Mammary epithelial cell (primary cell): ENCODE measurements at regions of chr22 and their contacts with region 1.

Region 1: DNA sequence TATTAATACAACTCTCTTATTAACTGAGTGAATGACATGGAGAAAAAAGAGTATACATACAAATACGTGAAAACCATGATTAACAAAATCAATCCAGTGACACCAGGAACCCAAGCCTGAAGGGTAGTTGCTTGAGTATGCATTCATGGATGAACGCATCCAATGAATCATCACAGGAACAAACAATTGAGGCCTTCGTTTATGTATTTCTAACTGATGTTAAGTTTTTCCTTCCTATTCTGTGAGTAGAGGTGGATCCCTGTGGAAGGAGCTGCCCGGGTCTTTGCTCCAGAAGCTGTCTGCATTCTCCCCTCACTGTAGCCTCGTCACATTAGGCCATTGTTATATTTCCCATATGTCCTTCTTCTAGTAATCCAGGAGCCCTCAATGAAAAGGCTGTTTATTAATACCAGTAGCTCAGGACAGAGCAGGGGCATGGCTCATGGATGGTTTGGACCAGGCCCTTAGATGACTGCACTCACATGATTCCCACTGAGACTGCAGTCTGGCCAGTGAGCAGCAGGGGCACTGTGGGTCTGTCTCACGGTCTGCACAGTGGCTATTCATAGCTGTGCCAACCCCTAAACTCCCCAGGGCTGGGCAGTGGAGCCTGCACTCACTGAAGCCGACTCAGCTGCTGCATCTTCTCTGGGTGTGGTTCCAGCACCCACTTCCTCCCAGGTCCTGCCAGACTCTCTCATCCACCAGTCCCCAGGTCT is 128.1 kb upstream of the TOP3B start:
- DNase-seq: peak; percentile 93
- H3K4me3 ChIP-seq: no peak overlapping the region
- H3K27ac ChIP-seq: peak overlapping the region; percentile 82
- H3K4me1 ChIP-seq: peaks cover 18% of the 10 kb centered on the region
- H3K27me3 ChIP-seq: no peaks in the 10 kb centered on the region
- CTCF ChIP-seq: peak; percentile 79 to 87

Region 2: DNA sequence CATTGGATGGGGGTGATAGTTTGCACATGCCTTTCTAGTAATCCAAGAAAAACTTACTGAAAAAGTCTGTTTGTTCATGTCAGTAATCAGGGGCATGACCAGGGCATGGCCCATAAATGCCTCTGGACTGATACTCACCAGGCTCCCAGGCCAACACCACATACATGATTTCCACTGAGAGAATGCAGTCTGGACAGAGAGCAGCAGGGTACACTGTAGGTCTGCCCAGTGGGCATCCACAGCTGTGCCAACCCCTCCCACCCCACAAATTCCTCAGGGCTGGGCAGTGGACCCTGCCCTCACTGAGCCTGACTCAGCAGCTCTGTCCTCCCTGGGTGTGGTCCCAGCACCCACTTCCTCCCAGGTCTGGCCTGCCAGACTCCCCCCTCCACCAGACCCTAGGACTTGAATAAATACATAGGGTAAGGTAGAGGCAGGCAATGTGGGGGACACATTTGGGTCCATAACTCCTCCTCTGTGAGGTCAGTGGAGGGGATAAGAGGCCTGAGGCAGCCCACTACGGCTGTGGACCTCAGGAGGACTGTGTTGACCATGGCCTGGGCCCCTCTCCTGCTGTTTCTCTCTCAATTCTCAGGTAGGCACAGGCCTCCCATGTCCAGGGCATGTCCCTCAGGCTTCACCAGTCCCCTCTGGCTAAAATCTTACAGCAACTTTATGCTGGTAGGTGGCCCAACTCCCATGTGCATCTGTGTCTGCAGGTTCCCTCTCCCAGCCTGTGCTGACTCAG is 35.9 kb before region 1 on chr22:
- CTCF ChIA-PET with region 1: interaction called, 3 read pairs
- dilution Hi-C with region 1: no loop called
- in situ Hi-C with region 1: no loop called
- intact Hi-C with region 1: loop called (anchors 1 kb)
- DNase-seq: peak; percentile 48
- H3K4me3 ChIP-seq: no peak overlapping the region
- H3K27ac ChIP-seq: peak overlapping the region; percentile 63
- H3K4me1 ChIP-seq: peaks cover 43% of the 10 kb centered on the region
- H3K27me3 ChIP-seq: no peaks in the 10 kb centered on the region
- CTCF ChIP-seq: peak in 1 of 2 donors; percentile 40

Region 3: DNA sequence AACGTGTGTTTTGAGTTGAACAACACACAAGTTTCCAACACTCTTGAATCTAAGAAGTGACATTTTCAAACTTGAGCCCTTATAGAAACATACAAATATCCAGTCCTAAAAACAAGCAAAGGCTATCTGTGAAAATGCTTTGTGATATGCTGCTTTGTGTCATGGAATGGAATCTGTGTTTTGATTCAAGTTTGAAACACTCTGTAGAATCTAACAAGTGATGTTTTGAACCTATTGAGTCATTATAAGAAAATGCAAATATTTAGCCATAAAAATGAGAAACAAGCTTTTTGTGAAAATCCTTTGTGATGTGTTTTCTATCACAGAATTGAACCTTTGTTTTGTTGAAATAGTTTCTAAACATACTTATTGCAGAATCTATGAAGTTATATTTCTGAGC is 28.2 kb after region 1 on chr22:
- CTCF ChIA-PET with region 1: no interaction called
- dilution Hi-C with region 1: no loop called
- in situ Hi-C with region 1: no loop called
- intact Hi-C with region 1: no loop called
- DNase-seq: no peak
- H3K4me3 ChIP-seq: no peak overlapping the region
- H3K27ac ChIP-seq: no peak overlapping the region
- H3K4me1 ChIP-seq: no peaks in the 10 kb centered on the region
- H3K27me3 ChIP-seq: no peaks in the 10 kb centered on the region
- CTCF ChIP-seq: no peak

Region 4: GRCh38 chr22:22156716-22157347 is 46.1 kb after region 1 on chr22:
- CTCF ChIA-PET with region 1: interaction called, 3 read pairs
- dilution Hi-C with region 1: no loop called
- in situ Hi-C with region 1: no loop called
- intact Hi-C with region 1: loop called (anchors 2 kb)
- DNase-seq: peak; percentile 43
- H3K4me3 ChIP-seq: no peak overlapping the region
- H3K27ac ChIP-seq: no peak overlapping the region
- H3K4me1 ChIP-seq: no peaks in the 10 kb centered on the region
- H3K27me3 ChIP-seq: no peaks in the 10 kb centered on the region
- CTCF ChIP-seq: peak; percentile 71 to 86